CD4-positive, alpha-beta T cell (primary cell): ENCODE measurements at regions of chr7 and their contacts with region 1.

Region 1: DNA sequence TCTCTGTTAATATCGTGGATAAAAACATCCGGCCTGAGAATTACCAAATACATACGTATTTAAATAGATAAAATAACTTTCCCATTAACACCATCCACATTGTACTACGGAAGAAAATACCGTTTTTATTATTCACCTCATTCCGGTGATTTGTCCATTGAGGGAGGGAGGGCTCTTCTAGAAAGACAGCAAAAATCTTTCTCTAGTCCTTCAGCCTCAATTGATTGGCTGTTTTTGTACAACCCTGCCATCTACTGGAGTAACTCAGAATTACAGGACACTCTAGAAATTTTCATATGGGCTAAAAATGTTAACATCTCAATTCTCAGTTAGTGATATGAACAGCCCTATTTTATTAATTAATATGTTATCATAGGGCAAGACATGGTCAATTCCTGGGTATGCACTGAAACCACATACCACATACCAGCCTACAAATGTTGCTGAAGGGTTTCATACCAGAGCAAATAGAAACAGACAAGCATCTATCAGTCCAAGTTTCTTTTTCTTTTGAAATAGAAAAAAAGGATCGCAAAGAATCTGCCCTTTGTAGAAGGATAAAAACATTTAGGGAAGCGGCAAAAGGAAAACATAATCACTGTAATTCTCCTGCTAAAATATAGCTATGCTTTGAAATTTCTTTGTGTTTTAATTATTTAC is 55.8 kb upstream of the CDCA7L start:
- DNase-seq: peak in 4 of 14 experiments; percentile 41 to 69 (median 64)
- ATAC-seq: peak; percentile 68
- H3K4me3 ChIP-seq: no peak overlapping the region
- H3K4me3 Mint-ChIP-seq: no peak overlapping the region
- H3K27ac ChIP-seq: no peak overlapping the region
- H3K27ac Mint-ChIP-seq: no peak overlapping the region
- H3K4me1 ChIP-seq: no peaks in the 10 kb centered on the region
- H3K4me1 Mint-ChIP-seq: peaks cover 4% of the 10 kb centered on the region
- H3K27me3 ChIP-seq: no peaks in the 10 kb centered on the region
- H3K27me3 Mint-ChIP-seq: peaks cover 5% of the 10 kb centered on the region
- CTCF ChIP-seq: peak; percentile 93

Region 2: GRCh38 chr7:21526007-21526406 is 475.5 kb before region 1 on chr7:
- CTCF ChIA-PET with region 1: no interaction called
- POLR2A ChIA-PET with region 1: no interaction called
- intact Hi-C with region 1: loop called in 1 of 2 experiments (anchors 10 kb)
- DNase-seq: peak in 4 of 14 experiments; percentile 11 to 40 (median 36)
- ATAC-seq: no peak
- H3K4me3 ChIP-seq: no peak overlapping the region
- H3K4me3 Mint-ChIP-seq: no peak overlapping the region
- H3K27ac ChIP-seq: no peak overlapping the region
- H3K27ac Mint-ChIP-seq: no peak overlapping the region
- H3K4me1 ChIP-seq: no peaks in the 10 kb centered on the region
- H3K4me1 Mint-ChIP-seq: no peaks in the 10 kb centered on the region
- H3K27me3 ChIP-seq: no peaks in the 10 kb centered on the region
- H3K27me3 Mint-ChIP-seq: no peaks in the 10 kb centered on the region
- CTCF ChIP-seq: peak; percentile 63

Region 3: DNA sequence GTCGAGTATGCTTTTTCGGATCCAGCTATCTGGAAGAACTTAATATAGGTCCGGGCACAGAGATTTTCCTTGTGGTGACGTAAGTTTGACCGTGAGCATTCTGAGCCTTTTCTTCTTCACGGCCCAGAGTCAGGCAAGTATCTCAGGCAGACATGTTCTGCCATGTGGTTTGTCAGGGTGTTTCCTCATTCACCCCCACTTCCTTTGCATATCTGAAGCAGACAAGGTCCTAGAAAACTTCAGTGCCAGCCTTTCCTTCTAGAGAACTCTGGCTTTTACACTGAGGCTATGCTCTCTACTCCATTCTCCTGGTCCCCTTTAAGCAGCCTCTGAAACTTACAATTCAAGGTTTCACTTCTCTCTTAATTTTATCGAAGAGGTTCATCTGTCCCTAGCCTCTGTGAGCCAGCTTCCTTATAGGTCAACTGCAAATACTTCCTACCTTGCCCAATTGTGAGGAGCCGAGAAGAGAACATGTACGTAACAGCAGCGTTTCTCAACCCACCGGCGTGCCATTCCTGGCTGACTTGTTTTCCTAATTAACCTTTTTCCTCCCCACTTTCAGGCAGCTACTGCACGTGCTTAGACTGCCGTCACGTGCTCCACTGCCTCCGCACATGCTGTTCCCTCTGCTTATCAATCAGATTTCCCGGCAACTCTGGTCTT is 103.1 kb before region 1 on chr7:
- CTCF ChIA-PET with region 1: no interaction called
- POLR2A ChIA-PET with region 1: no interaction called
- intact Hi-C with region 1: no loop called
- DNase-seq: peak in 7 of 14 experiments; percentile 2 to 57 (median 24)
- ATAC-seq: peak; percentile 86
- H3K4me3 ChIP-seq: peak overlapping the region; percentile 44
- H3K4me3 Mint-ChIP-seq: peak overlapping the region; percentile 79
- H3K27ac ChIP-seq: peak overlapping the region in 1 of 2 donors; percentile 52
- H3K27ac Mint-ChIP-seq: peak overlapping the region; percentile 78
- H3K4me1 ChIP-seq: peaks cover 17% of the 10 kb centered on the region
- H3K4me1 Mint-ChIP-seq: peaks cover 27% of the 10 kb centered on the region
- H3K27me3 ChIP-seq: no peaks in the 10 kb centered on the region
- H3K27me3 Mint-ChIP-seq: no peaks in the 10 kb centered on the region
- CTCF ChIP-seq: no peak